ENCODE measurements at regions of chr1 and their contacts with region 1.

Region 1: GRCh38 chr1:20485527-20486456 is at the start of gene CAMK2N1:
- DNase-seq: peak in 1 of 2 donors; percentile 93
- H3K4me3 ChIP-seq: peak within 1 kb of the TSS; percentile 44
- CTCF ChIP-seq: no peak
- POLR2A ChIP-seq: no peak
- total RNA-seq, gene CAMK2N1: 3.8 to 13.3 (median 8.4) TPM

Region 2: GRCh38 chr1:20380616-20381035 is 105.2 kb before region 1 on chr1:
- intact Hi-C with region 1: loop called (anchors 10 kb)
- DNase-seq: no peak
- H3K4me3 ChIP-seq: no peak overlapping the region
- CTCF ChIP-seq: no peak
- POLR2A ChIP-seq: no peak

Measured in lower leg skin (tissue), 4 donors.